ENCODE measurements at regions of chr15 and their contacts with region 1.

Region 1: GRCh38 chr15:75367913-75368688 is at the start of gene MAN2C1:
- DNase-seq: peak; percentile 80 to 97 (median 88)
- ATAC-seq: peak; percentile 95
- H3K4me3 ChIP-seq: peak within 1 kb of the TSS; percentile 91
- H3K4me3 Mint-ChIP-seq: peak within 1 kb of the TSS; percentile 94
- H3K27ac ChIP-seq: peak within 1 kb of the TSS; percentile 93 to 96
- H3K27ac Mint-ChIP-seq: peak within 1 kb of the TSS; percentile 94
- H3K4me1 ChIP-seq: peaks cover 32% of the 10 kb centered on the region
- H3K4me1 Mint-ChIP-seq: peaks cover 30% of the 10 kb centered on the region
- H3K27me3 ChIP-seq: no peaks in the 10 kb centered on the region
- H3K27me3 Mint-ChIP-seq: no peaks in the 10 kb centered on the region
- CTCF ChIP-seq: peak; percentile 59
- total RNA-seq, gene MAN2C1: 519 to 546 TPM

Region 2: DNA sequence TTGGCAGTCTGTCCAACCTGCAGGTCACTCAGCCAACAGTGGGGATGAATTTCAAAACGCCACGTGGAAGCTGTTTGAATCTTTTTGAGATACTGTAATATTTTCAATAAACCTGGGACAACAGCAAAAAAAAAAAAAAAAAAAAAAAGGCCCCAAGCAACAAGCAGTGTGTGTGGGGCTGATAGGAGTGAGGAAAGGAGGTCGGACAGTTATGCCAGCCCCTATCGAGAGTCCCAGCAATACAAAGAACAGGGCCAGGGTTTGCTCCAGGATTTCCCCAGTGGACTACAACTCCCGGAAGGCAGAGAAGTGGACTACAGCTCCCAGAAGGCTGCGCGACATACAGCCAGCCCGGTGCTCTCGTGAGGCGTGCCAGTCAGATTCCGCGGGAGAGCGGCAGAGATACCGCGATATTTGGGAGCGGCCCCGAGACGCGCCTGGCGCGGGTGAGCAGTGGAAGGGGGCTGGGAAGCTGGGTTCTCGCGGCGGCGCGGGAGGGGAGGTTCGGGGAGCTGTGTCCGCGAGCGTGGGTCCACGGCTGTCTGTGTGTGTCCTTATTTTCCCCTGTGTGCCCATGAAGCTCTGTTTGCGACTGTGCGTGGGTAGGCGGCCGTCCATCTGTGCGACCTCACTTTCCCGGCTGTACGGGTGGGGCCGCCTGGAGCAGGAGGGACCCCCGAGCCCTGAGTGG is 344.8 kb before region 1 on chr15 and contains the start of gene PPCDC:
- CTCF ChIA-PET with region 1: no interaction called
- POLR2A ChIA-PET with region 1: interaction called, 10 read pairs
- intact Hi-C with region 1: no loop called
- DNase-seq: peak; percentile 83 to 96 (median 90)
- ATAC-seq: peak; percentile 100
- H3K4me3 ChIP-seq: peak within 1 kb of the TSS; percentile 81
- H3K4me3 Mint-ChIP-seq: peak within 1 kb of the TSS; percentile 99
- H3K27ac ChIP-seq: peak within 1 kb of the TSS; percentile 46 to 50
- H3K27ac Mint-ChIP-seq: peak within 1 kb of the TSS; percentile 94
- H3K4me1 ChIP-seq: peaks cover 20% of the 10 kb centered on the region
- H3K4me1 Mint-ChIP-seq: peaks cover 23% of the 10 kb centered on the region
- H3K27me3 ChIP-seq: no peaks in the 10 kb centered on the region
- H3K27me3 Mint-ChIP-seq: no peaks in the 10 kb centered on the region
- CTCF ChIP-seq: no peak
- total RNA-seq, gene PPCDC: 5.5 to 5.8 TPM

Region 3: DNA sequence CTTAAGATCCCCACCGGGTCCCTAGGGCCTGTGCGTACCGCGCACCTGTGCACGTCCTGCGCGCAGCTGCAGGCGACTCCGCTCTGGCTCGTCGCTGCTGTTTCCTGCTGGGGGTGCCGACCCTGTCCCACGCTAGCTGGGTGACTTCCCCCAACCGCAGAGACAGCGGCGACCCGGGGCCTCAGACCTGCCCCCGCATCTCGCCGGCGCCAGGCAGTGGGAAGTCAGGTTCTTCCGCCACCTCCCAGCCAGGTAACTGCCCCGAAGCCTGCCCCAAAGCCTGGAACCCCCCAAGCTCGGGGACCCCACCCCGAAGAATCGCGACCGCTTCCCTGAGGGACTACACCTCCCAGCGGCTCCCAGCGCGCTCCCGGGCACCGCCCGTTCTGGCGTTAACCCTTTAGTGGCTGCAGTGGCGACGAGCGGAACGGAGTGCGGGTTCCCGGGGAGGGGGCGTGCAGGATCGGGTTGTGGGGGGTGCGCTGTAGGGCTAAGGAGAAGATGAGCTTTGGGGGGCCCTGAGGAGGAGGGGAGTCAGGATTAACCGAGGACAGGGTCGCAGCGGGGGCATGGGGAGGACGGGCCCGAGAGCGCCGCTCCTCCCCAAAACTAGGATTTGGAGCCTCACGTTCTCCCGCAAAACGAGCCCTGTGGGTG is 20.8 kb before region 1 on chr15:
- CTCF ChIA-PET with region 1: interaction called, 15 read pairs
- POLR2A ChIA-PET with region 1: interaction called, 146 read pairs
- intact Hi-C with region 1: loop called in 1 of 2 experiments (anchors 1 kb)
- DNase-seq: peak; percentile 31 to 83 (median 57)
- ATAC-seq: peak; percentile 67
- H3K4me3 ChIP-seq: peak overlapping the region; percentile 86
- H3K4me3 Mint-ChIP-seq: peak overlapping the region; percentile 89
- H3K27ac ChIP-seq: peak overlapping the region in 1 of 2 donors; percentile 43
- H3K27ac Mint-ChIP-seq: peak overlapping the region; percentile 83
- H3K4me1 ChIP-seq: peaks cover 51% of the 10 kb centered on the region
- H3K4me1 Mint-ChIP-seq: peaks cover 35% of the 10 kb centered on the region
- H3K27me3 ChIP-seq: no peaks in the 10 kb centered on the region
- H3K27me3 Mint-ChIP-seq: no peaks in the 10 kb centered on the region
- CTCF ChIP-seq: no peak

Region 4: DNA sequence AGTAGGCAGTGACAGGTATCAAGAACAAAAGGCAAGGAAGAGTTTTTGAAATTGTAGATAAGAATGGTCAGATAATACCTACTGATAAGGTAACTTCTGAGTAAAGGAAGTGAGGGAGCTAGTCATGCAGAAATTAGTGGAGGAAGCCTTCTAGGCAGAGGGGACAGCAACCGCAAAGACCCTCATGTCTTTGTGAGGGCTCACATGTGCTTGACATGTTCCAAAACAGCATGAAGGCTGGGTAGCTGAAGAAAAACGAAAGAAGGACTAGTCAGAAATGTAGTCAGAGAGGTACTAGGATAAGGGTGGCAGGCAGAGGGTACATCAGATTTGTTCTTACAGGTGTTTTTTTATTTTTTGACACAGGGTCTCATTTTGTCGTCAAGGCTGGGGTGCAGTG is 78.0 kb after region 1 on chr15:
- CTCF ChIA-PET with region 1: interaction called, 26 read pairs
- POLR2A ChIA-PET with region 1: interaction called, 246 read pairs
- intact Hi-C with region 1: loop called in 1 of 2 experiments (anchors 5 kb)
- DNase-seq: peak in 2 of 14 experiments; percentile 8 to 20
- ATAC-seq: no peak
- H3K4me3 ChIP-seq: no peak overlapping the region
- H3K4me3 Mint-ChIP-seq: peak overlapping the region; percentile 70
- H3K27ac ChIP-seq: peak overlapping the region in 1 of 2 donors; percentile 47
- H3K27ac Mint-ChIP-seq: peak overlapping the region; percentile 61
- H3K4me1 ChIP-seq: peaks cover 58% of the 10 kb centered on the region
- H3K4me1 Mint-ChIP-seq: peaks cover 69% of the 10 kb centered on the region
- H3K27me3 ChIP-seq: no peaks in the 10 kb centered on the region
- H3K27me3 Mint-ChIP-seq: no peaks in the 10 kb centered on the region
- CTCF ChIP-seq: no peak

Region 5: DNA sequence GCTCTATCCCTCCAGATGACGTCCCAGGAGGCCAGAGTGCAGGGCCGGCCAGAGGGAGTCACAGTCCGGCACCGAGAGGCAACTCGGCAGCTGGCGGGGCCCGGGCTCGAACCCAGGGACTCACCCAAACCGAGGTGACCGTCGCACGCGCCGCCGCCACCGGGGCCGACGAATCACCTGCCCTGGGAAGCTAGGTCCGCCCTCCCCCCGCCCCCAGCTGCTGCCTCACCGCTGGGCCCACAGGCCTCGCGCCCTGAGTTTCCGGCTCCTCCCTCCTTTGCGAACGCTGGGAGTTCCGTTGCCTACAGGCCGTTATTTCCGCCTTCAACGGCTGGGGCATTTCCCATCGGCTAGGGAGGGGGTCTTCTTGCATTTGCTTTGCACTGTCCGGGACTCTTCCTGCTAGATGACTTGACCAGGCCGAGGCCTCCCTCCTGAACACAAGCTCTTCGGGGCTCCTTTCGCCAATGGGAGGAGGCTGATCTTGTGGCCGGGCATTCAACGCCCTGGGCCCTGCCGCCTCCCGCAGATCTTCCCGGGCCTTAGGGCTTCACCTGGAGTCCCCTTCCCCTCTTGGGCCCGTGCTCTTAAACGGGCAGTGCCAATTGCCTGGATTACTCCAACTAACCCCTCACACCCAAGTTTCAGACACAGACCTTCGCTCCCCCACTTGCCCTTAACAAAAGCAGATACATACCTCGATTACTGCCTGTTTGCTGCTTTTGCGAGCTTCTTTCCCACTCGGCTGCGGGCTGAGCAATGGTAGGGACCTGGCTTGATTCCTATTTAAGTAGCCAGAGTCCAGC is 257.6 kb after region 1 on chr15 and contains the start of gene SNUPN:
- CTCF ChIA-PET with region 1: interaction called, 4 read pairs
- POLR2A ChIA-PET with region 1: interaction called, 40 read pairs
- intact Hi-C with region 1: loop called in 1 of 2 experiments (anchors 5 kb)
- DNase-seq: peak; percentile 86 to 97 (median 92)
- ATAC-seq: peak; percentile 92
- H3K4me3 ChIP-seq: peak within 1 kb of the TSS; percentile 100
- H3K4me3 Mint-ChIP-seq: peak within 1 kb of the TSS; percentile 92
- H3K27ac ChIP-seq: peak within 1 kb of the TSS; percentile 95
- H3K27ac Mint-ChIP-seq: peak within 1 kb of the TSS; percentile 90
- H3K4me1 ChIP-seq: peaks cover 31% of the 10 kb centered on the region
- H3K4me1 Mint-ChIP-seq: peaks cover 29% of the 10 kb centered on the region
- H3K27me3 ChIP-seq: no peaks in the 10 kb centered on the region
- H3K27me3 Mint-ChIP-seq: no peaks in the 10 kb centered on the region
- CTCF ChIP-seq: no peak
- total RNA-seq, gene SNUPN: 10.0 to 11.6 TPM

Region 6: DNA sequence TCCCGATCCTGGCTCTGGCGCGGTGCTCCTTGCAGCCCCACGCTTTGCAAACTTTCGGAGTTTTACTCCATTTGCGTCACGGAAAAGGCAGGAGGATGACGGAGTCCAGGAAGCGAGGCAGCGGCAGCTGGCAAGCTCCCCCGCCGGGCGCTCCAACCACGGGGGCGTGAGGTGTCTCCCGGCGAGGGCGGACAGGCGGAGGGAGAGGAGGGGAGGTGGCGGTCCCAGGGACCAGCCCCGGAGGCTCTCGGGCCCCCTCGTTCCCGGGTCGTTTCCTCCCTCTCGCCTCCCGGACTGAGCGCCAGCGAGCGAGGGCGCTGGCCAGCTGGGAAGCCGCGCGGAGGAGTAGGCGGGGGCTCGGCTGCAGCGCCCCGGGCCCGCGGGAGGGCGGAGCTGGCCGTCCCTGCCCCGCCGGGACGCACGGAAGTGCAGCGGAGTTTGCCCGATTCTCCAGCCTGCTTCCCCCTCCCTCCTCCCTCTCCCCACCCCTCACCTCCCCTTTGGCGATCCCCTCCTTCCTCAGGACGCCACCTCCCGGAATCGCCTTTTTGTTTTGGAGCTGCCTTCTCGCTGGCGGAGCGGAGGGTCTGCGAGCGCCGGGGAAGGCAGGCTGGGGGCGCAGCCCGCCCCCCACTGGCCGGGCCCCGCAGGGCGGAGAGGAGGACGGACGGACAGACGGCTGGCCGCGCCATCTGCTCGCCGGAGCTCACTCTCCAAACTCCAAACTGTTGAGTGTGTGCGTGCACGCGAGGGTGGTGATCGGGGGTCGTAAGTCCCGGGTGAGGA is 279.5 kb after region 1 on chr15 and contains the start of gene SNX33:
- CTCF ChIA-PET with region 1: interaction called, 19 read pairs
- POLR2A ChIA-PET with region 1: interaction called, 124 read pairs
- intact Hi-C with region 1: no loop called
- DNase-seq: peak; percentile 10 to 75 (median 38)
- ATAC-seq: peak; percentile 68
- H3K4me3 ChIP-seq: peak within 1 kb of the TSS; percentile 84
- H3K4me3 Mint-ChIP-seq: peak within 1 kb of the TSS; percentile 86
- H3K27ac ChIP-seq: peak within 1 kb of the TSS in 1 of 2 donors; percentile 1
- H3K27ac Mint-ChIP-seq: peak within 1 kb of the TSS; percentile 42
- H3K4me1 ChIP-seq: peaks cover 41% of the 10 kb centered on the region
- H3K4me1 Mint-ChIP-seq: peaks cover 31% of the 10 kb centered on the region
- H3K27me3 ChIP-seq: no peaks in the 10 kb centered on the region
- H3K27me3 Mint-ChIP-seq: no peaks in the 10 kb centered on the region
- CTCF ChIP-seq: no peak
- total RNA-seq, gene SNX33: 0.59 to 0.82 TPM

Region 7: GRCh38 chr15:75801859-75802593 is 433.9 kb after region 1 on chr15:
- CTCF ChIA-PET with region 1: no interaction called
- POLR2A ChIA-PET with region 1: no interaction called
- intact Hi-C with region 1: loop called in 1 of 2 experiments (anchors 5 kb)
- DNase-seq: peak; percentile 67 to 87 (median 74)
- ATAC-seq: peak; percentile 100
- H3K4me3 ChIP-seq: no peak overlapping the region
- H3K4me3 Mint-ChIP-seq: no peak overlapping the region
- H3K27ac ChIP-seq: no peak overlapping the region
- H3K27ac Mint-ChIP-seq: no peak overlapping the region
- H3K4me1 ChIP-seq: peaks cover 7% of the 10 kb centered on the region
- H3K4me1 Mint-ChIP-seq: peaks cover 4% of the 10 kb centered on the region
- H3K27me3 ChIP-seq: peaks cover 10 to 11% of the 10 kb centered on the region in 2 experiments
- H3K27me3 Mint-ChIP-seq: peaks cover 47% of the 10 kb centered on the region
- CTCF ChIP-seq: peak; percentile 81